ENCODE measurements at regions of chrX and their contacts with region 1.

Region 1: DNA sequence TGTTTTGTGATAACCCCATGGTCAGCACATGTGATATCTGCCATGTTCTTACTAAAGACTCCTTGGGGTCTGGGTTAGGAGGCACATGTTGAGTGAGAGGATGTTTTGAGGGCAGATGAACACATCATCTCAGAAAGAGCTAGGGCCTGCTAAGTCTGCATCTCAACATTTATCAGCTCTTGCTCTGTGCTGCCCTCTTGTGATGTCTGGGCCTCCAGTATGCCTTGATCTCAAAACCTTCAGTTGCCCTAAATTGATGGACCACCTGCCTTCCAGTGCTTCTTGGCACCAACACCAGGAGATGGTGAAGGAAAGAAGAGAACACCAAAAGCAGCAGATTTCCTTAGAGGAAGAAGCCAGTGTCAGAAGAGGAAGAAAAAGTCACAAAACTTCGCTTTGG is 22.5 kb downstream of the MID1 start:
- DNase-seq: peak; percentile 25
- ATAC-seq: peak; percentile 78
- H3K4me3 Mint-ChIP-seq: no peak overlapping the region
- H3K27ac Mint-ChIP-seq: no peak overlapping the region
- H3K4me1 Mint-ChIP-seq: peaks cover 53% of the 10 kb centered on the region
- H3K27me3 Mint-ChIP-seq: no peaks in the 10 kb centered on the region
- CTCF ChIP-seq: no peak

Region 2: DNA sequence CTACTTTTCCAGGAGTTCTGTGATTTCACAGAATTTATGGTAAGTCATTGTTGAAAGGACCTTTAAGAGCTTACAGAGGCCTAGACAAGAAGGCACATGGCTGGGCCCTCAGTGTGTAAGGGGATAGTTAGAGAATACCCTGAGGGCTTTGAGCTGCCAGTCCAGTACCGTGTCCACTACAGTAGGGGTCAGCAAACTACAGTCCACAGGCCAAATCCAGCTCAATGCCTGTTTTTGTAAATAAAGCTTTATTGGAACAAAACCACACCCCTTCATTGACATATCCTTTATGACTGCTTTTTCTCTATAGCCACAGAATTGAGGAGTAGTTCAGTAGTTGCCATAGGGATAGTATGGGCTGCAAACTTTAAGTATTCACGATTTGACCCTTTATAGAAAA is 153.7 kb before region 1 on chrX:
- CTCF ChIA-PET with region 1: interaction called, 10 read pairs
- POLR2A ChIA-PET with region 1: no interaction called
- DNase-seq: no peak
- ATAC-seq: peak; percentile 54
- H3K4me3 Mint-ChIP-seq: no peak overlapping the region
- H3K27ac Mint-ChIP-seq: no peak overlapping the region
- H3K4me1 Mint-ChIP-seq: peaks cover 15% of the 10 kb centered on the region
- H3K27me3 Mint-ChIP-seq: peaks cover 43% of the 10 kb centered on the region
- CTCF ChIP-seq: no peak

Measured in WTC11 (cell line).